CD8-positive, alpha-beta T cell (primary cell): ENCODE measurements at regions of chr7 and their contacts with region 1.

Region 1: GRCh38 chr7:2698581-2699288 is 10.7 kb downstream of the AMZ1 start:
- DNase-seq: peak; percentile 34 to 92 (median 76)
- ATAC-seq: peak; percentile 92
- H3K4me3 ChIP-seq: peak overlapping the region; percentile 15
- H3K4me3 Mint-ChIP-seq: peak overlapping the region; percentile 64
- H3K27ac ChIP-seq: peak overlapping the region in 1 of 2 experiments; percentile 38
- H3K27ac Mint-ChIP-seq: peak overlapping the region; percentile 85
- H3K4me1 ChIP-seq: peaks cover 23% of the 10 kb centered on the region
- H3K4me1 Mint-ChIP-seq: peaks cover 21% of the 10 kb centered on the region
- H3K27me3 ChIP-seq: no peaks in the 10 kb centered on the region
- H3K27me3 Mint-ChIP-seq: no peaks in the 10 kb centered on the region
- CTCF ChIP-seq: no peak

Region 2: GRCh38 chr7:2613931-2614600 is 84.7 kb before region 1 on chr7:
- CTCF ChIA-PET with region 1: no interaction called
- POLR2A ChIA-PET with region 1: no interaction called
- intact Hi-C with region 1: no loop called
- DNase-seq: no peak
- ATAC-seq: no peak
- H3K4me3 ChIP-seq: no peak overlapping the region
- H3K4me3 Mint-ChIP-seq: no peak overlapping the region
- H3K27ac ChIP-seq: no peak overlapping the region
- H3K27ac Mint-ChIP-seq: no peak overlapping the region
- H3K4me1 ChIP-seq: peaks cover 4% of the 10 kb centered on the region
- H3K4me1 Mint-ChIP-seq: peaks cover under 1% of the 10 kb centered on the region
- H3K27me3 ChIP-seq: no peaks in the 10 kb centered on the region
- H3K27me3 Mint-ChIP-seq: no peaks in the 10 kb centered on the region
- CTCF ChIP-seq: no peak

Region 3: GRCh38 chr7:2632733-2633537 is 65.8 kb before region 1 on chr7:
- CTCF ChIA-PET with region 1: no interaction called
- POLR2A ChIA-PET with region 1: no interaction called
- intact Hi-C with region 1: loop called in 1 of 2 experiments (anchors 5 kb)
- DNase-seq: peak in 7 of 9 experiments; percentile 15 to 60 (median 48)
- ATAC-seq: peak; percentile 4
- H3K4me3 ChIP-seq: peak overlapping the region; percentile 69 to 79
- H3K4me3 Mint-ChIP-seq: peak overlapping the region; percentile 88
- H3K27ac ChIP-seq: peak overlapping the region; percentile 43 to 53
- H3K27ac Mint-ChIP-seq: peak overlapping the region; percentile 77
- H3K4me1 ChIP-seq: peaks cover 25% of the 10 kb centered on the region
- H3K4me1 Mint-ChIP-seq: peaks cover 14% of the 10 kb centered on the region
- H3K27me3 ChIP-seq: no peaks in the 10 kb centered on the region
- H3K27me3 Mint-ChIP-seq: no peaks in the 10 kb centered on the region
- CTCF ChIP-seq: no peak

Region 4: GRCh38 chr7:2670720-2671391 is 27.9 kb before region 1 on chr7:
- CTCF ChIA-PET with region 1: interaction called, 264 read pairs
- POLR2A ChIA-PET with region 1: no interaction called
- intact Hi-C with region 1: no loop called
- DNase-seq: peak; percentile 37 to 83 (median 73)
- ATAC-seq: peak; percentile 87
- H3K4me3 ChIP-seq: no peak overlapping the region
- H3K4me3 Mint-ChIP-seq: no peak overlapping the region
- H3K27ac ChIP-seq: no peak overlapping the region
- H3K27ac Mint-ChIP-seq: no peak overlapping the region
- H3K4me1 ChIP-seq: peaks cover 8% of the 10 kb centered on the region
- H3K4me1 Mint-ChIP-seq: peaks cover 6% of the 10 kb centered on the region
- H3K27me3 ChIP-seq: no peaks in the 10 kb centered on the region
- H3K27me3 Mint-ChIP-seq: peaks cover 21% of the 10 kb centered on the region
- CTCF ChIP-seq: peak; percentile 87

Region 5: GRCh38 chr7:2715341-2716231 is 16.9 kb after region 1 on chr7:
- CTCF ChIA-PET with region 1: interaction called, 59 read pairs
- POLR2A ChIA-PET with region 1: interaction called, 19 read pairs
- intact Hi-C with region 1: loop called in 1 of 2 experiments (anchors 2 kb)
- DNase-seq: peak in 7 of 9 experiments; percentile 25 to 80 (median 58)
- ATAC-seq: peak; percentile 81
- H3K4me3 ChIP-seq: peak overlapping the region in 1 of 2 experiments; percentile 21
- H3K4me3 Mint-ChIP-seq: peak overlapping the region; percentile 69
- H3K27ac ChIP-seq: no peak overlapping the region
- H3K27ac Mint-ChIP-seq: peak overlapping the region; percentile 86
- H3K4me1 ChIP-seq: peaks cover 61% of the 10 kb centered on the region
- H3K4me1 Mint-ChIP-seq: peaks cover 68% of the 10 kb centered on the region
- H3K27me3 ChIP-seq: peaks cover 4% of the 10 kb centered on the region in 2 experiments
- H3K27me3 Mint-ChIP-seq: peaks cover 17% of the 10 kb centered on the region
- CTCF ChIP-seq: no peak

Region 6: DNA sequence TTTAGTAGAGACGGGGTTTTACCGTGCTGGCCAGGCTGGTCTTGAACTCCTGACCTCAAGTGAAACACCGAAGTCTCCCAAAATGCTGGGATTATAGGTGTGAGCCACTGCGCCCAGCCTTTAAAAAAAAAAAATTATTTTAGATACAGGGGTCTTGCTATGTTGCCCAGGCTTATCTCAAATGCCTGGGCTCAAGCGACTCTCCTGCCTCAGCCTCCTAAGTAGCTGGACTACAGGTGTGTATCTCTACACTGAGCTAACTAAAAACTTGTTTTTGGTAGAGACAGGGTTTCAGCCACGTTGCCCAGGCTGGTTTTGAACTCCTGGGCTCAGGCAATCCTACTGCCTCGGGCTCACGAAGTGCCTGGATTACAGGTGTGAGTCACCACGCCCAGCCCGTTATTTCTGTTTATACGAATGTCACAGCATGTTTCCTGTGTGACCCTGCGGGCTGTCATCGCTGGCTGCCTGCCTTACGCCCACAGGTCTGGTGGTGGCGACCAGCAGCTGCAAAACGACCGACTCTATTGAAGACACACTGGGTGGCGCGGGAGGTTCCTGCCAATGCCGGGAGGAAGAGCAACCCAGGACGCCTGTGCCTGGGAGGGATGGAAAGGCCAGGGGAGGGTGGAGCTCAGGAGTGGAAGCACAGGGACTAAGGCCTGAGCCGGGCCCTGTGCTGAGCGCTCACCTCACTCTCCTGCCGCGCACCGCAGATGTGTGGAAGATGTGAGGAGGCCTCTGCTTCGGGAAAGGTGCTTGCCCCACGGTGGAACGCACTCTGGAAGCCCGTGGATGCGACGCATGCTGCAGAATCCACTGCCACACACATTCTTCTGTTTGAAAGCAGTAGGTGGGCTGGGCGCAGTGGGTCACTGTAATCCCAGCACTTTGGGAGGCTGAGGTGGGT is 22.1 kb after region 1 on chr7:
- CTCF ChIA-PET with region 1: interaction called, 12 read pairs
- POLR2A ChIA-PET with region 1: interaction called, 3 read pairs
- intact Hi-C with region 1: no loop called
- DNase-seq: peak; percentile 24 to 86 (median 66)
- ATAC-seq: peak; percentile 32
- H3K4me3 ChIP-seq: no peak overlapping the region
- H3K4me3 Mint-ChIP-seq: peak overlapping the region; percentile 42
- H3K27ac ChIP-seq: no peak overlapping the region
- H3K27ac Mint-ChIP-seq: peak overlapping the region; percentile 89
- H3K4me1 ChIP-seq: peaks cover 42% of the 10 kb centered on the region
- H3K4me1 Mint-ChIP-seq: peaks cover 55% of the 10 kb centered on the region
- H3K27me3 ChIP-seq: no peaks in the 10 kb centered on the region
- H3K27me3 Mint-ChIP-seq: peaks cover 9% of the 10 kb centered on the region
- CTCF ChIP-seq: no peak